ENCODE measurements at regions of chr14 and their contacts with region 1.

Region 1: GRCh38 chr14:47917345-47917954 is 242.0 kb upstream of the MDGA2 start:
- H3K4me3 Mint-ChIP-seq: no peak overlapping the region
- H3K27ac Mint-ChIP-seq: no peak overlapping the region
- H3K4me1 Mint-ChIP-seq: no peaks in the 10 kb centered on the region
- H3K27me3 Mint-ChIP-seq: no peaks in the 10 kb centered on the region

Region 2: DNA sequence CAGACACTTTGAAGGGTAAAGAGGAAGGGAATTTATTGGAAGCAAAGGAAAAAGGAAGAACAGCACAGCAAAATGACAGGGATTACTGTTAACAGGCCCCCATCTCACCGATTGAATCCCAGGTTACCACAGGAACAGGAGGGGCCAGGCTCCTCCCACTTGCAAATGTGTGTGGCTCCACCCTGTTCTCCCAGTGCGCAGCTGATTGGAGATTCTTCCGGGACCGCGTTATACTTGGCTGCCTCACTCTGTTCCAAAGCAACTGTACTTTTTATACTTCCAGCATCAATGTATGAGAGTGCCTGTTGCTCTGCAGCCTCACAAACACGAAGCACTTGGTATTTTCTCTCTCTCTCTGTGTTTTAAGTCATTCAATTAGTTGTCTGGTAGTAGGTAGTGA is 31.6 kb after region 1 on chr14:
- intact Hi-C with region 1: no loop called
- H3K4me3 Mint-ChIP-seq: no peak overlapping the region
- H3K27ac Mint-ChIP-seq: no peak overlapping the region
- H3K4me1 Mint-ChIP-seq: no peaks in the 10 kb centered on the region
- H3K27me3 Mint-ChIP-seq: no peaks in the 10 kb centered on the region

Region 3: GRCh38 chr14:49173765-49174373 is 1256.4 kb after region 1 on chr14:
- intact Hi-C with region 1: loop called (anchors 10 kb)
- H3K4me3 Mint-ChIP-seq: no peak overlapping the region
- H3K27ac Mint-ChIP-seq: no peak overlapping the region
- H3K4me1 Mint-ChIP-seq: no peaks in the 10 kb centered on the region
- H3K27me3 Mint-ChIP-seq: no peaks in the 10 kb centered on the region

Region 4: DNA sequence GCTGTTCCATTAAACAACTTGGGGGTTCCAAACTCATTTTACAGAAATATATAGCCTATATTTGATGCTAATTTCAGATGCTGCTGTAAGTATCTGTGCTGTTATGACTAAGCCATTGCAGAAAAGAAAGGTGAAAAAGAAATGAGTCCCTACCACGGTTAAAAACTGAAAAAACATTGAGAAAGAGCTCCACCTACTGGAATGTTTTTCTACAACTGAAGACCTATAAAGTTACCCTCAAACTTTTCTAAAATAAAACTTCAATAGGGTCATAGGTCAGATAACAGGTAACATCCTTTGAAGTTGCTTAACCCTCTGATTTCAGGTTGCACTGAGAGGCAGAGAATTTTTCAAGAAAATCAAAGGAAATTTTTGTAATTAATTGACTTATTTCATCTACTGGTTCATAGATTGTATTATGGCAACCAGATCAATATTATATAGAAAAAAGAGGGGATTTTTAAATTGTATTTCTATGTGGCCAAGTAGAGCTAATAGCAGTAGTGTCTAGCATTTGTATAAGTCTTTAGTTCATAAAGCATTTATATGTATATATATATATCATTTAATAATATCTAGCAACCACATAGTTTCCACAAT is 1388.8 kb after region 1 on chr14:
- intact Hi-C with region 1: loop called (anchors 5 kb)
- H3K4me3 Mint-ChIP-seq: no peak overlapping the region
- H3K27ac Mint-ChIP-seq: no peak overlapping the region
- H3K4me1 Mint-ChIP-seq: no peaks in the 10 kb centered on the region
- H3K27me3 Mint-ChIP-seq: no peaks in the 10 kb centered on the region

Measured in dendritic cell treated with granulocyte-macrophage colony-stimulating factor and Interleukin-4, amounts not matched to agents 40 ng/mL and 50 ng/mL, for 4 days (primary cell).